ENCODE measurements at regions of chr9 and their contacts with region 1.

Region 1: DNA sequence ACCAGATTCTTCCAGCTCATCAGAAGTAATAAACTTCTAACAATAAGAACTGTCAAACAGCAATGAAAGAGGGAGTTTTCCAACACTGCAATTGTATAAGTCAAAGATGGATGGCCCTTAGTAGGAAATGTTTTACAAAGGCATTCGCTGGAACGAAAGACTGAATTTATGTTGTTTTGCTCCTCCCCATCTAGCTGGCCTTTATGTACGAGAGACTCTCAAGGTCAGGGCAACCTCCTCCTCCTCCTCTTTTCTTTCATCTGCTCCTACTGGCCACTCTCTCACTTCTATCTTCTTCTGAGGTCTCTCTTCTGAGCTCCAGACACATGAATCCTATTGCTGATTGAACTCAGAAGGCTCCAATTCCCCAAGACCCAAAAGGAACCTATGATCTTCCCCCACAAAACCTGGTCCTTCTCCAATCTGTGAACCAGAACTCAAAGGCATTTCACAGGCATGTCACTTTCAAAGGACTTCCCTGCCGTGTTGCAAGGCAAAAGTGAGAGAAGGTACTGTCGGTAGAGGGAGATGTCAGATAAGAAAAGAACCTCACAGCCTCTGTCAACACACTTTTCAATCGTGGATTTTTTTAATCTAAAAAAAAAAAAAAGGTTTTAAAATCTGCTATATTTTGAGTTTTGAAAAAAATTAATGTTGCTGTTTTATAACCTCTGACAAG is 28.5 kb upstream of the PUM3 start:
- DNase-seq: no peak
- ATAC-seq: peak in 3 of 4 donors; percentile 29 to 53 (median 45)
- H3K4me3 ChIP-seq: no peak overlapping the region
- H3K27ac ChIP-seq: no peak overlapping the region
- H3K4me1 ChIP-seq: no peaks in the 10 kb centered on the region
- H3K27me3 ChIP-seq: no peaks in the 10 kb centered on the region
- CTCF ChIP-seq: peak in 2 of 4 donors; percentile 20 to 34
- POLR2A ChIP-seq: no peak

Region 2: GRCh38 chr9:2824564-2824963 is 47.8 kb before region 1 on chr9:
- intact Hi-C with region 1: no loop called
- DNase-seq: no peak
- ATAC-seq: no peak
- H3K4me3 ChIP-seq: no peak overlapping the region
- H3K27ac ChIP-seq: no peak overlapping the region
- H3K4me1 ChIP-seq: no peaks in the 10 kb centered on the region
- H3K27me3 ChIP-seq: no peaks in the 10 kb centered on the region
- CTCF ChIP-seq: no peak
- POLR2A ChIP-seq: no peak

Region 3: GRCh38 chr9:3018076-3018475 is 145.7 kb after region 1 on chr9:
- intact Hi-C with region 1: no loop called
- DNase-seq: no peak
- ATAC-seq: no peak
- H3K4me3 ChIP-seq: no peak overlapping the region
- H3K27ac ChIP-seq: no peak overlapping the region
- H3K4me1 ChIP-seq: no peaks in the 10 kb centered on the region
- H3K27me3 ChIP-seq: no peaks in the 10 kb centered on the region
- CTCF ChIP-seq: no peak
- POLR2A ChIP-seq: no peak

Region 4: DNA sequence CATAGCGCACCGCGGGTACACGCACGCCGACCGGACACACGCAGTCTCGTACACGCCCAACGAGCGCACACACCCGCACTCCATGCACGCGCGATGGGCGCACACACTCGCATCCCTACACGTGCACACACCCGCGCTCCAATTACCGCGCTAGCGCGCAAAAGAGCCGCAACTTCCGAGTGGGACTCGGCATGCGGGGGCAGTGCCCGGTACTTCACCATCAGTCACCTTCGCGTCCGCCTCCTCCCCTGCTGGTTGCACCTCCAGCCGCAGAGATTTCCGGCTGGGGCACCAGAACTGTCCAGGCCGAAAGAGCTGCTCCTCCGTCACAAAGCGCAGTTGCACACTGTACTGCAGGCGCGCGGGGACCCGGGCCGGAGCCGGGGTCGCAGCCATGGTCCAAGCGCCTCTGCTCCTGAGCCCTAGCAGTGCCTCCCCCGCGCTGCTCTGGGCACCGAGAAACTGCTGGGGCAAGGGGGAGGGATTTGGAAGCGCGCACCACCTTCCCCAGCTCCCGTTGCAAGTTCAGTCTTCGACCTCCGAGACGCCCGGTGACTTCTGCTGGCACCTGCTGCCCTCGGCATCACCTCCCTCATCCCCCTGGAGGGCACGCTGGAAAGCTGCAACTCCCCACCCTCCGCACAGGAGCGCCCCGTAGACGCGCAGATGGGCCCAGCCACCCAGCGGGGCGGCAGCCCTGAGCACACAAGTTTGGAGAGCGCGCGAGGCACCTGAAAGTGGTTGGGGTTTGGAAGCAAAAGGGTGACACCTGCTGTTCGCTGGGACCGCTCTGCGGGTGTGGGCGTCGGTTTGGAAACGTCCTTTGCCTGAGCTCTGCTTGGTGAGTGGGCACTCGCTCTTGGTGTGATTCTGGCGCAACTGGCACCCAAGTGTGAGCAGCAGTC is 308.9 kb after region 1 on chr9:
- intact Hi-C with region 1: loop called in 1 of 2 experiments (anchors 10 kb)
- DNase-seq: peak; percentile 42 to 75 (median 61)
- ATAC-seq: peak; percentile 51 to 82 (median 80)
- H3K4me3 ChIP-seq: no peak overlapping the region
- H3K27ac ChIP-seq: no peak overlapping the region
- H3K4me1 ChIP-seq: peaks cover 0 to 14% (median 0%) of the 10 kb centered on the region in 4 donors
- H3K27me3 ChIP-seq: no peaks in the 10 kb centered on the region
- CTCF ChIP-seq: peak in 3 of 4 donors; percentile 5 to 59 (median 44)
- POLR2A ChIP-seq: no peak

Measured in right lobe of liver (tissue), 6 donors.